Lower lobe of right lung (tissue), 2 donors: ENCODE measurements at regions of chr12 and their contacts with region 1.

Region 1: GRCh38 chr12:459430-460258 is at the start of gene B4GALNT3:
- DNase-seq: peak; percentile 83
- ATAC-seq: peak; percentile 93
- H3K4me3 ChIP-seq: peak within 1 kb of the TSS; percentile 58
- H3K27ac ChIP-seq: peak within 1 kb of the TSS; percentile 72
- H3K4me1 ChIP-seq: peaks cover 18% of the 10 kb centered on the region
- H3K27me3 ChIP-seq: peaks cover 40% of the 10 kb centered on the region
- CTCF ChIP-seq: no peak
- total RNA-seq, gene B4GALNT3: 20.6 TPM

Region 2: DNA sequence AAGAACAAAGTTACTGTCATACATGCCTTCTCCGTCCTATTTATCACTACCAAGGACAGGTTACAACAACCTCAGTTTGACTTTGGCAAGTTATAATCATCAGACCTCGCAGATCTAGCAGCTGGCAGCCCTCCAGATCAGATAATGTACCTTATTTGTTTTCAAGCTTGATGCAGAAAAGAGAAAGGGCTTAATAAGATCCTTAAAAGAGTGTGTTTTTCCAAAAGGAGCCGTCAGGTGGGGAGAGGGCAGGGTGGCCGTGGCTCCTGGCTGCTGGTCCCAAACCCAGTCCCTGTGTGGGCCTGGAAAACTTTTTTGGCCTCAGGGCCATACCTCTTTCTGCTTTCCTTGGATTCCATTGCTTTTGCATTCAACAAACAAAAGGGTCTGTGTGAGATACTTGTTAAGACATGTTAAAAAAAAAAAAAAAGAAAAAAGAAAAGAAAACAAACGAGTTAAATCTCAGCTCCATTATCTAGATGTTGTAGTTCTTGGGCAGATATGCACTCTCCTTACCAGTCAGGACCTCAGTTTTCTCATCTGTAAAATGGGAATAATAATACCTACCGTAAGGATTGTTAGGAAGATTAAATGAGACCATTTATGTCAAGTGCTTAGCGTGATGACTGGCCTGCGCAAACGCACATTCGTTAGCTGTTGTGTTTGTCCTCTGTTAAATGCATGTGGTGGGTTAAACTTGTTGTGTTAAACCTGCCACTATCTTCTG is 64.7 kb after region 1 on chr12:
- intact Hi-C with region 1: loop called (anchors 10 kb)
- DNase-seq: no peak
- ATAC-seq: no peak
- H3K4me3 ChIP-seq: no peak overlapping the region
- H3K27ac ChIP-seq: no peak overlapping the region
- H3K4me1 ChIP-seq: no peaks in the 10 kb centered on the region
- H3K27me3 ChIP-seq: no peaks in the 10 kb centered on the region
- CTCF ChIP-seq: no peak

Region 3: DNA sequence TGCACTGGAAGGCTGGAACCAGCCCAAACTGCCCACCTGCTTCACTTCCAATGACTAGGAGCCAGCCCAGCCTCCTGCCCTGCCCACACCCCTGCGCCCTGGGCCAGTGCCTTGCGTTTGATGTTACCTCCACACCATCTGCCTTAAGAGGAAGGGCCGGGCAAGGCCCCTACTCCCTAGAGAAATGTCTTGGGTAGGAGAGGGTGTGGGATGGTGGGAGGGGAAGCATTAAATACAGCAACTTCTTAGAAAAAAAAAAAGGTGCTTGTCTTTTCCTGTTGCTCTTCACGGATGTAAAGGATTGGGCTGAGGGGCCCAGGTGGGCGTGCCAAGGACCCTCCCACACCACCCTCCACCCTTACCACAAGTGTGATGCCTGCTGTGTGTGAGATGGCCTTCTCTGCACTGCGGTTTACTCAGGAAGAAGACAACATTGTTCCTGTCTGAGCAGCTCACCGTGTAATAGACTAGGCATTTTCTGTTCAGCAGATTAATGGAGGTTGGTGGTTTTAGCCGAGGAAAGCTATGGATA is 103.7 kb after region 1 on chr12:
- intact Hi-C with region 1: no loop called
- DNase-seq: no peak
- ATAC-seq: peak in 1 of 2 donors; percentile 14
- H3K4me3 ChIP-seq: no peak overlapping the region
- H3K27ac ChIP-seq: peak overlapping the region; percentile 78
- H3K4me1 ChIP-seq: peaks cover 20% of the 10 kb centered on the region
- H3K27me3 ChIP-seq: no peaks in the 10 kb centered on the region
- CTCF ChIP-seq: no peak